A549 (cell line): ENCODE measurements at regions of chr3 and their contacts with region 1.

Region 1: DNA sequence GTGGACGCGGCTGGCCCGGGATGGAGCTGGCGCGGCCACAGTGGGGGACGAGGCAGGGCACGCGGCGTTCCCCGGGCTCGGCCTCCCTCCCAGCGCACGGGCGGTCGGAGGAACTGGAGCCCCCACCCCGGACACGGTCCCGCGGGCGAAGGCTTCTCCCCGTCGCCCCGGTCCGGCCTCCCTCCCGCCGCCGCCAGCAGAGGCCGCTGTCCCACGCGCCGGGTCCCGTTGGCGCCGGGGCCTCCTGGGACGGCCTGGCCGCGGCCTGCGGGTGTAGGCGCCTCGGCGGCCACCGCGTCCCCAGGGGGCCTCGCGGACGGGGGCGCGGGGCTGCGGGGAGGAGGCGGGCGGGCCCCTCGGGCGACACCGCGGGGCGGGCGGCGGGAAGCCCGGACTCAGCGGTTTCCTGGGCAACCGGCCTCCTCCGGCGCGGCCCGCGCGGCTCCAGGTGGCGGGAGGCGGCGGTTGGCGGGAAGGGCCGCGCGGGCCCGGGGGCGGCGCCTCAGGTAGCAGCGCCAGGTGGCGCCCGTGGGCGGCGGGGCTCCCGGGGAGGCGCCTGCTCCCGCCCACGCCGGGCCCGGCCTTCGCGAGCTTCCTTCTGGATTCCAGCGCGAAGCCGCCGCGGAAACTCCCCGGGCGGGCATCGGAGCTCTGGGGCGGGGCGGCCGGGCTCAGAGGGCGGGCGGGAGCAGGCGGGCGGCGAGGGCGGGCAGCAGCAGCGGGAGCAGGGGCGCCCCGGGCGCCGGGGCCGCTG is 26.7 kb downstream of the MELTF start:
- DNase-seq: peak; percentile 64 to 66
- ATAC-seq: peak; percentile 82
- H3K4me3 ChIP-seq: peak overlapping the region; percentile 54
- H3K27ac ChIP-seq: peak overlapping the region; percentile 92 to 99
- H3K4me1 ChIP-seq: peaks cover 7% of the 10 kb centered on the region
- CTCF ChIP-seq: peak; percentile 83
- EP300 ChIP-seq: no peak
- POLR2A ChIP-seq: no peak
- RAD21 ChIP-seq: peak; percentile 37 to 70; a peak in 4 of 5 replicates

Region 2: DNA sequence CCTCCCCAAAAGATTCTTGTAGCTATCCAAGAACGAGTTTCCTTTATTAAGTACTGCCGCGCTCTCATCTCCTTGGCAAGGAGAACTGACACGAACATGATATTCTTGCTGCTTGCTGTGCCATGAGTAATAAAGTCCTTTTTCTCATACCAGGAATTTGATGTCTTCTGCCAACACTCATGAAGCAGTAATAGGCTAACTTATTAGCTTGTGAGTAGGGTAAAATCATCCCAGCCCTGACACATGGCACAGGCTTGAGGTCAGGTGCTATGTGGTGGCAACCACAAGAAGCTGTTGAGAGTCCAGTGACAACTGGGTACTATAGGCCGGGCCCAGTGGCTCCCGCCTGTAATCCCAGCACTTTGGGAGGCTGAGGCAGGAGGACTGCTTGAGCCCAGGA is 547.9 kb before region 1 on chr3:
- CTCF ChIA-PET with region 1: no interaction called
- POLR2A ChIA-PET with region 1: no interaction called
- DNase-seq: no peak
- ATAC-seq: no peak
- H3K4me3 ChIP-seq: no peak overlapping the region
- H3K27ac ChIP-seq: no peak overlapping the region
- H3K4me1 ChIP-seq: no peaks in the 10 kb centered on the region
- CTCF ChIP-seq: no peak
- EP300 ChIP-seq: no peak
- POLR2A ChIP-seq: no peak
- RAD21 ChIP-seq: no peak

Region 3: GRCh38 chr3:196988241-196989029 is 14.4 kb before region 1 on chr3:
- CTCF ChIA-PET with region 1: interaction called, 13 read pairs
- POLR2A ChIA-PET with region 1: no interaction called
- DNase-seq: peak in 1 of 2 experiments; percentile 44
- ATAC-seq: peak; percentile 80 to 88
- H3K4me3 ChIP-seq: no peak overlapping the region
- H3K27ac ChIP-seq: no peak overlapping the region
- H3K4me1 ChIP-seq: no peaks in the 10 kb centered on the region
- CTCF ChIP-seq: no peak; the same call in 2 of the 3 replicates
- EP300 ChIP-seq: no peak
- POLR2A ChIP-seq: no peak
- RAD21 ChIP-seq: no peak

Region 4: GRCh38 chr3:197023241-197023997 is 20.5 kb after region 1 on chr3:
- CTCF ChIA-PET with region 1: interaction called, 49 read pairs
- POLR2A ChIA-PET with region 1: no interaction called
- DNase-seq: no peak
- ATAC-seq: no peak
- H3K4me3 ChIP-seq: no peak overlapping the region
- H3K27ac ChIP-seq: no peak overlapping the region
- H3K4me1 ChIP-seq: peaks cover 7% of the 10 kb centered on the region; the same call in 1 of the 3 replicates
- CTCF ChIP-seq: no peak
- EP300 ChIP-seq: no peak
- POLR2A ChIP-seq: no peak
- RAD21 ChIP-seq: no peak

Region 5: DNA sequence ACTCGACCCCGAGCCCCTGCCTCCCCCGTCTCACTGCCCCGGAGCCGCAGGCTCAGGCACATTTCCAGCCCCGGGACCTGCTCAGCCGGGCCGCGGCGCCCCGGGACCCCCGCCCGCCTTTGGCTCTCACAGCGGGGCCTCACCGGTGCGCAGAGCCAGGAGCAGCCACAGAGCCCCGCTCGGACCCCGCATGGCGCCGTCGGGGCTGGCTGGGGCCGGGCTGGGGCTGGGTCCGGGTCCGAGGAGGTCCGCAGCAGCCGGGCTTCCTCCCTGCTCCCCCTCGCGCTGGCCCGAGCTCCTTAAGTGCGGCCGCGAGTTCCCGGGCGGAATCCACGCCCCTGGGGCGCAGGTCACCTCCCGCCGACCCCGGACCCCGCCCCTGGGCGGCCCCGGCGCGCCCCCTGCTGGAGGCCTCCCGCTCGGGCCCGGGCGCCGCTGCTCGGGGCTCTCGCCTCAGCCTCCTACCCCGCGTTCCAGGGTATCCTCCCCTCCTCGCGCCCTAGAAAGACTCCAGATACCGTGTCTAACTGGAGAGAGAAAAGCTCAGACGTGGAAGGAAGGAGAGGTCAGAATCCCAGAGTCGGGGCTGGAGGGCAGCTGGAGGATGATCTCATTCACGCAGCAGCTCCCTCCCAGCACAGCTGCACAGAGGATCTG is 26.8 kb after region 1 on chr3 and contains the start of gene MELTF:
- CTCF ChIA-PET with region 1: interaction called, 49 read pairs
- POLR2A ChIA-PET with region 1: interaction called, 3 read pairs
- DNase-seq: peak; percentile 75 to 80
- ATAC-seq: peak; percentile 55 to 81
- H3K4me3 ChIP-seq: peak within 1 kb of the TSS; percentile 100
- H3K27ac ChIP-seq: peak within 1 kb of the TSS; percentile 97 to 99
- H3K4me1 ChIP-seq: peaks cover 31% of the 10 kb centered on the region
- CTCF ChIP-seq: peak; percentile 76
- EP300 ChIP-seq: no peak
- POLR2A ChIP-seq: peak; percentile 45
- RAD21 ChIP-seq: peak in 1 of 2 experiments; percentile 45; a peak in 4 of 5 replicates
- polyA plus RNA-seq, gene MELTF: 10.5 and 10.9 TPM in 2 replicates